Gastrocnemius medialis (tissue), 4 donors: ENCODE measurements at regions of chr5 and their contacts with region 1.

Region 1: GRCh38 chr5:174910245-174910737 is 185.9 kb downstream of the MSX2 start:
- DNase-seq: peak; percentile 17 to 32
- ATAC-seq: peak; percentile 72 to 78
- H3K4me3 ChIP-seq: peak overlapping the region in 2 of 4 donors; percentile 28 to 32
- H3K27ac ChIP-seq: no peak overlapping the region
- H3K4me1 ChIP-seq: no peaks in the 10 kb centered on the region
- H3K27me3 ChIP-seq: no peaks in the 10 kb centered on the region
- CTCF ChIP-seq: peak; percentile 43 to 81 (median 60)
- POLR2A ChIP-seq: no peak

Region 2: GRCh38 chr5:174777583-174777982 is 132.7 kb before region 1 on chr5:
- in situ Hi-C with region 1: no loop called
- intact Hi-C with region 1: no loop called
- DNase-seq: no peak
- ATAC-seq: no peak
- H3K4me3 ChIP-seq: no peak overlapping the region
- H3K27ac ChIP-seq: no peak overlapping the region
- H3K4me1 ChIP-seq: no peaks in the 10 kb centered on the region
- H3K27me3 ChIP-seq: no peaks in the 10 kb centered on the region
- CTCF ChIP-seq: no peak
- POLR2A ChIP-seq: no peak

Region 3: DNA sequence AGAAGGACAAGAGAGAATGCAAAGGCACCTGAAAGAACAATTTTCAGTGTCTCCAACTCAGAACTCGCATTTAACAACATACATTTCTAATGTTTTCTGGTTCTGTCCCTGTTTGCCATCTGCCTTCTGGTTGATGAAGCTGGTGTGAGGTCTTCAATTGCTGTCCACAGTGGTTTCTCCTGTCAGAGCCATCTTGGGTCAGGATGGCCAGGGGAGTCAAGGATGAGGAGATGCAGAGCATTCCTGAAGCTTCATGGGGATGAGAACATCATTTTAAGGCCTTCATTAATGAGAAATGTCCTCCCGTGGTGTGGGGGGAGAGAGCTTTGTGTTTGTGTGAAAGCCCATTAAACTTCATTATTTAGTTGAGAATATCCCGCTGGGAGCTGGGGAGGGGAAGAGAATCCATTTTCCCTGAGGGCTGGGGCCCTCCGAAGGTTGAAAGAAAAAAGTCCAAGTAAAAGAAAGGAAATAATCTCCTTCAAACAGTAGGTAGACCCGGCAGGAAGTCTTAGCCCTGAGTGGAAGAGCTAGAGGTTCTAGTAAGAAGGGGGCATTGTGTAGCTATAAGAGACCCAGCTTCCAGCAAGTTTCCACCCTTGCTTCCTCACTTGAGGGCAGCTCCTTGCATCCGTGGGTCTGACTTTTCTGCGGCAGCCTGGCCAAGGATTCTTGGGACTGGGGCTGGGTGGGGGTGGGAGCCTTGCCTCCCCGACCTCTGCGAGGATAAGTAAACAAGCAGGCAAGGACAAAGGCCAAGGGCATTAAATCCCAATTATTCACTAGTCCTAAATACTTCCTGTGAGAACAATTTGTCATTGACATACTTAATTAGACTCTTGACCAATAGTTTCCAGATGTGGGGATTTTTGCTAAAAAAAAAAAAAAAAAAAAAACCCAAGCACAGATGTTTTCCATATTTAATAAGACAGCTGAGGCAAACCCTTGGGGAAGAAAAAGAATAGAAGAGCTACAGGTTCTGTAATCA is 66.7 kb before region 1 on chr5:
- in situ Hi-C with region 1: no loop called
- intact Hi-C with region 1: loop called (anchors 5 kb)
- DNase-seq: no peak
- ATAC-seq: peak in 1 of 2 donors; percentile 57
- H3K4me3 ChIP-seq: no peak overlapping the region
- H3K27ac ChIP-seq: peak overlapping the region in 2 of 4 donors; percentile 10 to 31
- H3K4me1 ChIP-seq: no peaks in the 10 kb centered on the region
- H3K27me3 ChIP-seq: no peaks in the 10 kb centered on the region
- CTCF ChIP-seq: no peak
- POLR2A ChIP-seq: no peak

Region 4: GRCh38 chr5:174935854-174936474 is 25.7 kb after region 1 on chr5:
- in situ Hi-C with region 1: no loop called
- intact Hi-C with region 1: loop called (anchors 2 kb)
- DNase-seq: peak; percentile 8 to 24
- ATAC-seq: peak in 1 of 2 donors; percentile 55
- H3K4me3 ChIP-seq: no peak overlapping the region
- H3K27ac ChIP-seq: no peak overlapping the region
- H3K4me1 ChIP-seq: no peaks in the 10 kb centered on the region
- H3K27me3 ChIP-seq: no peaks in the 10 kb centered on the region
- CTCF ChIP-seq: peak; percentile 42 to 79 (median 66)
- POLR2A ChIP-seq: no peak

Region 5: GRCh38 chr5:175025077-175025476 is 114.8 kb after region 1 on chr5:
- in situ Hi-C with region 1: no loop called
- intact Hi-C with region 1: no loop called
- DNase-seq: no peak
- ATAC-seq: no peak
- H3K4me3 ChIP-seq: no peak overlapping the region
- H3K27ac ChIP-seq: no peak overlapping the region
- H3K4me1 ChIP-seq: no peaks in the 10 kb centered on the region
- H3K27me3 ChIP-seq: no peaks in the 10 kb centered on the region
- CTCF ChIP-seq: no peak
- POLR2A ChIP-seq: no peak